Activated CD4-positive, alpha-beta T cell treated with anti-CD3 and anti-CD28 coated beads, Interleukin-2, amount 10 ng/mL, durations not matched to agents 24 days and 14 days (primary cell): ENCODE measurements at regions of chr2 and their contacts with region 1.

Region 1: DNA sequence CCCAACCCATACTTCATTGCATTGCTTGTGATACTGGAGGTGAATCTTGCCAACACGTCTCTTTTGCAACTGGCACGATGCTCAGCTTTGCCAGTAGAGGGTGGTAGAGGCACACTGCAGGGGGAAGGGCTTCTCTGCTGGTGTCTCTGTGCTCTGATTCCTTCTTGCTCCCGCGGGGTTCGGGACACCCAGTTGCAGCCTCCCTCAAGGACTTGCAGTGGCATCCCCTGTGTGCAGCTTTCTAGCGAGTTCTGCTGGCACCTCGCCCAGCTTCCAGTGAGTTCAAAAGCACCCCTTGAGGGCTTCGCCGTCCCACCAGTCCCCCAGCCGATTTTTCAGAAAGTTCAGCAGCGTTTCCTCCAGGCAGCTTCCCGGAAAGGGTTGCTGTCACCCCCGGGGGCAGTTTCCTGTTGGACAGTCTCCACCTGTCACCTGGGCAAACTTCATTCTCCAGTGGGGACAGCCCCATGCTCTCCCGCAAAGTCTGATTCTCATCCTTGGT is 35.3 kb upstream of the EN1 start:
- DNase-seq: peak; percentile 87
- H3K4me3 Mint-ChIP-seq: peak overlapping the region; percentile 74
- H3K27ac Mint-ChIP-seq: no peak overlapping the region
- H3K4me1 Mint-ChIP-seq: peaks cover 4% of the 10 kb centered on the region
- H3K27me3 Mint-ChIP-seq: no peaks in the 10 kb centered on the region

Region 2: DNA sequence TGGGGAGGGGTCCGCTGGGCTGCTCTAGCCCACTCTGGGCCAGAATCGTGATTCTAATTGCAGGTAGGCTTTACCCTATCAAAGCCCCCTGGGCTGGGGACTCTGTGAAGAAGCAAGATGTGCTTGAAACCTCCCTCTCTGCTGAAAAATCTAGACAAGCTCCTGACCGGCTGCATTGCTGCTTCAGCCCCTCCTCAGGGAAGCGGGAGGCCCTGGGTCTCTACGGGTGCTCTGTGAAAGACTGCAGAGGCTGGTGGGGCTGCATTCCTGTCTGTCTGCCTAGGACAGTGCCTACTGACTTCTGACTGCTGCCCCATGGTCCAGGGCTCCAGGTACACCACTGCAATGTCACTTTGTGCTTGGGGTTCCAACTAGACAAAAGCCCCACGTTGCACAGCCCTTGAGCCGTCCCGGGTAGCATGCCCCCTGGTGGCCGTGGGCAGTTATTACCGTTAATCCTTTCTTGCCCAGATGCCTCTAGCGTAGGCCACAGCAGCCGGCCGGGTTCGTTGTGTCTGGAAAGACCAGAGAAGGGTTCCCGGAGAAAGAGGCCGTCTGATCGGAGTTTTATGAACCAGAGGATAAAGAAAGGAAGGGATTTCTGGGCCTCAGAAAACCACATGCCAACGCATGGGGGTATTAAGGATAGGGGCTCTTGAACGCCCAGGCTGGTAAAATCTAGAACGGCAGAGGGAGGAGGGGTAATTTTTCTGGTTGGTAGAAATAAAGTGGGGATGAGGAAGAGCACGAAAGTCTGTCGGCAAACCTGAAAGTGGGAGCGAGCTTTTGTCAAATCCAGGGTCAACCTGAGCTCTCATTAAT is 291.7 kb after region 1 on chr2:
- intact Hi-C with region 1: loop called (anchors 1 kb)
- DNase-seq: peak; percentile 82
- H3K4me3 Mint-ChIP-seq: no peak overlapping the region
- H3K27ac Mint-ChIP-seq: no peak overlapping the region
- H3K4me1 Mint-ChIP-seq: no peaks in the 10 kb centered on the region
- H3K27me3 Mint-ChIP-seq: no peaks in the 10 kb centered on the region

Region 3: DNA sequence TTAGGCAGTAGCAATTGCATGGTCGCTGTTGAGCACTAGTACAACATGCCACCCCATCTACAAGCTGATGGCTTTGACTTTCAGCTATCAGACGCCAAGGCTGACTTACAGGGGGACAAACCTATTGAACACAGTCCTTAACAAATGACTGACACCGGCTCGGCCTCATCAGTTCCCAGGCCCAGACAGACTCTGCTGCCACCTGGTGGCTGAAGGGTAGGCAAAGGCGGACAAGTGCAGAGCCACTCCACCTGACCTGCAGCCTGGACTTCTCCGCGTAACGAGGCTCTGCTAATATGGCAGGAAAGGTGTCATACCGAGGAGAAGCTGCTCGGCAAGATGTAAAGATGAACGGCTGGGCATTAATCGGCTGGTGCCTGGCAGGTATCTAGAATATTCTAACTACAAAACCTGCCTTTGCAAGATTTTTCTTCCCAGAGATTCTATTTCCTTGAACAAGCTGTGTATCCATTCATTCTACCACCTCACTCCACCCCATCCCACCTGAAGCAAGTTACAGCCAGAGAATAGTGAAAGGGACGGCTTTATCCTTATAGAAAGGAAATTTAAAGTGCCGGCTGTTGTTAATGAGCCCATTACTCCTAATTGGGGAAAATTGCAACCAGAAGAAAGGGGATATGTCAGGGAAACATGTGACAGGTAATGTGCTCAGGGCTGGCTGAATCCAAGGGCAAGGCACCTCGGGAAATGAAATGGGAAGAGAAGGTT is 408.3 kb after region 1 on chr2:
- intact Hi-C with region 1: loop called (anchors 1 kb)
- DNase-seq: peak; percentile 87
- H3K4me3 Mint-ChIP-seq: no peak overlapping the region
- H3K27ac Mint-ChIP-seq: no peak overlapping the region
- H3K4me1 Mint-ChIP-seq: peaks cover 4% of the 10 kb centered on the region
- H3K27me3 Mint-ChIP-seq: no peaks in the 10 kb centered on the region